ENCODE measurements at regions of chr1 and their contacts with region 1.

Region 1: GRCh38 chr1:186985889-186986491 is 157.2 kb downstream of the PLA2G4A start:
- DNase-seq: peak in 5 of 9 donors; percentile 25 to 39 (median 36)
- ATAC-seq: peak; percentile 58
- H3K4me3 ChIP-seq: no peak overlapping the region
- H3K4me3 Mint-ChIP-seq: no peak overlapping the region
- H3K27ac ChIP-seq: no peak overlapping the region
- H3K27ac Mint-ChIP-seq: no peak overlapping the region
- H3K4me1 ChIP-seq: no peaks in the 10 kb centered on the region
- H3K4me1 Mint-ChIP-seq: no peaks in the 10 kb centered on the region
- H3K27me3 ChIP-seq: no peaks in the 10 kb centered on the region
- H3K27me3 Mint-ChIP-seq: peaks cover 0 to 23% (median 3%) of the 10 kb centered on the region in 5 donors

Region 2: DNA sequence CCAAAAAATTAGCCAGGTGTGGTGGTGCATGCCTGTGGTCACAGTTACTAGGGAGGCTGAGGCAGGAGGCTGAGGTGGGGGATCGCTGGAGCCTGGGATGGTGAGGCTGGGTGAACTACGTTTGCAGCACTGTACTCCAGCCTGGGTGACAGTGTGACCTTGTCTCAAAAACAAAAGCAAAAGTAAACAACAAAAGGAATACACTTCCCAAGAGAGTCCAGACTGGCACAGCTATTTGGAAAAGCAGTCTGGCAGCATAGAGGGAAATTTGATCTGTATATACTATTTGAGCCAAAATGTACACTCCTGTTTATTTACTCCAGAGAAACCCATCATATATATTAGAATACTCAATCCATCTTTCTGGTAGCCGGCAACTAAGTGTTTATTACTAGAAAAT is 1358.8 kb before region 1 on chr1:
- CTCF ChIA-PET with region 1: no interaction called
- POLR2A ChIA-PET with region 1: no interaction called
- intact Hi-C with region 1: no loop called
- DNase-seq: no peak
- ATAC-seq: no peak
- H3K4me3 ChIP-seq: no peak overlapping the region
- H3K4me3 Mint-ChIP-seq: no peak overlapping the region
- H3K27ac ChIP-seq: no peak overlapping the region
- H3K27ac Mint-ChIP-seq: no peak overlapping the region
- H3K4me1 ChIP-seq: no peaks in the 10 kb centered on the region
- H3K4me1 Mint-ChIP-seq: peaks cover 0 to 7% (median 0%) of the 10 kb centered on the region in 7 donors
- H3K27me3 ChIP-seq: no peaks in the 10 kb centered on the region
- H3K27me3 Mint-ChIP-seq: no peaks in the 10 kb centered on the region

Region 3: DNA sequence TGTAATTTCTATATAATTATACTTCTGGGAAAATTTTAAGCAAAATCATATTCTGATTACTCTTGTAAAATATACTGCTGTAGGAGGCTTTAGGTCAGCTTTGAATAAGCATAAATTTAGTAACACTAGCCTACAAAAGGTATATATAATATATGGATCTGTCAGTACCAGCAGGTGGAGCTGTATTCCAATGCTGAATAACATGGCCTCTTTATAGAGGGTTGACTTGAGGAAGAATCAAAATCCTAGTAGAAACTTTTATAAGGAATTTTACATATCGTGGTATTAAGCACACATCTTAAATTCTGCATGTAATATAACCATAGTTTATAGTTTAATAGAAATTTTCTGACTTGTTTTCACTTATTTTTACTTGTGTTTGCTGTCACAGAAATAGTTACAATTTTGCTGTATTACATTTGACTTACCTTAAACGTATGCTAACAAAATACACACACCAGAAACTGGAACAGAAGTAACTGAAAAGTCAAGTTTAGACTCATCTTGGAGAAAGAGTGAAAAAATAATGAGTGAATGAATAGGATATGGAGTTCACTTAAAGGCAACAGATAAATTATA is 1172.5 kb before region 1 on chr1:
- CTCF ChIA-PET with region 1: no interaction called
- POLR2A ChIA-PET with region 1: no interaction called
- intact Hi-C with region 1: loop called in 1 of 2 experiments (anchors 10 kb)
- DNase-seq: peak in 5 of 9 donors; percentile 5 to 15 (median 10)
- ATAC-seq: peak; percentile 50
- H3K4me3 ChIP-seq: no peak overlapping the region
- H3K4me3 Mint-ChIP-seq: no peak overlapping the region
- H3K27ac ChIP-seq: no peak overlapping the region
- H3K27ac Mint-ChIP-seq: no peak overlapping the region
- H3K4me1 ChIP-seq: no peaks in the 10 kb centered on the region
- H3K4me1 Mint-ChIP-seq: no peaks in the 10 kb centered on the region
- H3K27me3 ChIP-seq: no peaks in the 10 kb centered on the region
- H3K27me3 Mint-ChIP-seq: peaks cover 3 to 13% (median 8%) of the 10 kb centered on the region in 5 donors

Region 4: DNA sequence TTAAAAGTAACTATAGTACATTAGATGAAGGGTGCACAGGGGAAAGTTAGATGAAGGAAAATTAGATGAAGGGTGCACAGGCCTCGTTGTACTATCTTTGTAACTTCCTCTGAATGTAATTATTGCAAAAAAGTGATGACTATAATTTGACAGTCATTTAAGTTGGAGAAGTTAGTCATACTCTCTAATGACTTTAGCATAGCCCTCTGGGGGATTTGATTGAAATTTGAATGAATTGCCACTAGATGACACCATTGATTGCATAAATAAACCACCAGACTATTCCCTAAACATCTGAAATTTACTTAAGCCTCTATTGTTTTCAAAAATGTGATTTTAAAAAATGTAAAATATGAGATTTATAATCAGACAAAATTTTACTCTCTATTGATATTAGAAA is 713.5 kb before region 1 on chr1:
- CTCF ChIA-PET with region 1: no interaction called
- POLR2A ChIA-PET with region 1: no interaction called
- intact Hi-C with region 1: loop called (anchors 1 kb)
- DNase-seq: peak in 5 of 9 donors; percentile 36 to 55 (median 46)
- ATAC-seq: peak; percentile 50
- H3K4me3 ChIP-seq: no peak overlapping the region
- H3K4me3 Mint-ChIP-seq: no peak overlapping the region
- H3K27ac ChIP-seq: no peak overlapping the region
- H3K27ac Mint-ChIP-seq: peak overlapping the region in 2 of 9 donors; percentile 45 to 74
- H3K4me1 ChIP-seq: no peaks in the 10 kb centered on the region
- H3K4me1 Mint-ChIP-seq: peaks cover 6 to 24% (median 20%) of the 10 kb centered on the region in 7 donors
- H3K27me3 ChIP-seq: no peaks in the 10 kb centered on the region
- H3K27me3 Mint-ChIP-seq: peaks cover 0 to 11% (median 0%) of the 10 kb centered on the region in 5 donors

Region 5: DNA sequence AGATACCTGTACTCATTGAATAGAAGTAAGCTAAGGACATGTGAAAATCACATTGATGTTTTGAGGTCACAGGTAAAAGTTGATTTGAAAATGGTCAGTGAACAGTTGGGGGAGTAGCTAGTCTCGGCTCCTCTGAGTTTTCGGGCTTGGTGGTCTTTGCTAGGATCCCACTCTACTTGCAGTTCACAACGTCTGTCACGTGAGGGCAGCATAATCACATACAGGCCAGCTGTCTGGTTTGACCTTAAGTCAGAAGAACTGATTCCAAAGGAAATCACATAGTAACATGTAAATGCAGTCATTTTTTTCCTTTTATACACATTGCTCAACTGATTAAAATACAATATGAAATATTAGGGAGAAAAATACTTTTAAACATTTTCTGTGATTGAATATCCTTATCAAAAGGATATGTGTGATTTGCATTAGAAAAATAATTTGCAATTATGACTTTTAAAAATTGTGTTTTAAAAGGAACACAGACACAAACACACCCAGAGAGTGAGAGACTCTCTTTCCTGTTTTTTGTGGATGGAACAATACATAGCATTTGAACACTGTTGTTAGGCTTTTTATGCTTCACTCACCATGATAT is 503.2 kb before region 1 on chr1:
- CTCF ChIA-PET with region 1: interaction called, 4 read pairs
- POLR2A ChIA-PET with region 1: no interaction called
- intact Hi-C with region 1: loop called in 1 of 2 experiments (anchors 1 kb)
- DNase-seq: peak in 7 of 9 donors; percentile 3 to 40 (median 14)
- ATAC-seq: peak; percentile 63
- H3K4me3 ChIP-seq: no peak overlapping the region
- H3K4me3 Mint-ChIP-seq: no peak overlapping the region
- H3K27ac ChIP-seq: no peak overlapping the region
- H3K27ac Mint-ChIP-seq: peak overlapping the region in 1 of 9 donors; percentile 6
- H3K4me1 ChIP-seq: no peaks in the 10 kb centered on the region
- H3K4me1 Mint-ChIP-seq: no peaks in the 10 kb centered on the region
- H3K27me3 ChIP-seq: no peaks in the 10 kb centered on the region
- H3K27me3 Mint-ChIP-seq: peaks cover 0 to 25% (median 0%) of the 10 kb centered on the region in 5 donors

Region 6: DNA sequence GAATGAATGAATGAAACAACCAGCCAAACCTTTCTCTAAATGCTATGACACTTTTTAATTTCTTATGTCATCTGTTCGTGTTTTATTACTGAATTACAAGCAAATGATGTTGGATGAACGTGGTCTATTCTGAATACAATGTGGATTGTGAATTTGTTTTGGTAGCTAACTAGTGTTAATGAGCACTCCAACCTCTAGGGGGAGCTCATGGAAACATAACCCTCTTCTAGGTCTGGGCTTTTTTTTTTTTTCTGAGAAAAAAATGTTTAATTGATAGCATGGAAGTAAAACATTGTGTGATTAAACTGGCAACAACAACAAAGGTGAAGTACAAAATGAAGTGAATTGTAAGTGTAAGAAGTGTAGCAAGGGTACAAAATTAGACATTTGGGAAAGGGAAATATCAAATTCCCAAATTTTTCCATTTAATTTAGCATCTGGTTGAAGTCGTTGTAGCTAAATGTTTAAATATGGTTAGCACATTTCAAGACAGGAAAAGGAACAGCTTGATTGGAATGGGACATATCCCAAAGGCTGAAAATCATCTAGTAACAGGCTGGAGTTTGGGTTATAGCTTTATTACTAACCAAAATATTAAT is 263.2 kb before region 1 on chr1:
- CTCF ChIA-PET with region 1: no interaction called
- POLR2A ChIA-PET with region 1: no interaction called
- intact Hi-C with region 1: loop called in 1 of 2 experiments (anchors 2 kb)
- DNase-seq: peak in 1 of 9 donors; percentile 10
- ATAC-seq: peak; percentile 47
- H3K4me3 ChIP-seq: no peak overlapping the region
- H3K4me3 Mint-ChIP-seq: no peak overlapping the region
- H3K27ac ChIP-seq: no peak overlapping the region
- H3K27ac Mint-ChIP-seq: no peak overlapping the region
- H3K4me1 ChIP-seq: no peaks in the 10 kb centered on the region
- H3K4me1 Mint-ChIP-seq: no peaks in the 10 kb centered on the region
- H3K27me3 ChIP-seq: no peaks in the 10 kb centered on the region
- H3K27me3 Mint-ChIP-seq: peaks cover 6 to 9% (median 7%) of the 10 kb centered on the region in 5 donors

Region 7: GRCh38 chr1:187010571-187011310 is 24.8 kb after region 1 on chr1:
- CTCF ChIA-PET with region 1: no interaction called
- POLR2A ChIA-PET with region 1: no interaction called
- intact Hi-C with region 1: no loop called
- DNase-seq: no peak
- ATAC-seq: no peak
- H3K4me3 ChIP-seq: no peak overlapping the region
- H3K4me3 Mint-ChIP-seq: no peak overlapping the region
- H3K27ac ChIP-seq: no peak overlapping the region
- H3K27ac Mint-ChIP-seq: no peak overlapping the region
- H3K4me1 ChIP-seq: no peaks in the 10 kb centered on the region
- H3K4me1 Mint-ChIP-seq: no peaks in the 10 kb centered on the region
- H3K27me3 ChIP-seq: no peaks in the 10 kb centered on the region
- H3K27me3 Mint-ChIP-seq: peaks cover 0 to 10% (median 0%) of the 10 kb centered on the region in 5 donors

Measured in naive thymus-derived CD4-positive, alpha-beta T cell (primary cell).